PC-9 (cell line): ENCODE measurements at regions of chr14 and their contacts with region 1.

Region 1: DNA sequence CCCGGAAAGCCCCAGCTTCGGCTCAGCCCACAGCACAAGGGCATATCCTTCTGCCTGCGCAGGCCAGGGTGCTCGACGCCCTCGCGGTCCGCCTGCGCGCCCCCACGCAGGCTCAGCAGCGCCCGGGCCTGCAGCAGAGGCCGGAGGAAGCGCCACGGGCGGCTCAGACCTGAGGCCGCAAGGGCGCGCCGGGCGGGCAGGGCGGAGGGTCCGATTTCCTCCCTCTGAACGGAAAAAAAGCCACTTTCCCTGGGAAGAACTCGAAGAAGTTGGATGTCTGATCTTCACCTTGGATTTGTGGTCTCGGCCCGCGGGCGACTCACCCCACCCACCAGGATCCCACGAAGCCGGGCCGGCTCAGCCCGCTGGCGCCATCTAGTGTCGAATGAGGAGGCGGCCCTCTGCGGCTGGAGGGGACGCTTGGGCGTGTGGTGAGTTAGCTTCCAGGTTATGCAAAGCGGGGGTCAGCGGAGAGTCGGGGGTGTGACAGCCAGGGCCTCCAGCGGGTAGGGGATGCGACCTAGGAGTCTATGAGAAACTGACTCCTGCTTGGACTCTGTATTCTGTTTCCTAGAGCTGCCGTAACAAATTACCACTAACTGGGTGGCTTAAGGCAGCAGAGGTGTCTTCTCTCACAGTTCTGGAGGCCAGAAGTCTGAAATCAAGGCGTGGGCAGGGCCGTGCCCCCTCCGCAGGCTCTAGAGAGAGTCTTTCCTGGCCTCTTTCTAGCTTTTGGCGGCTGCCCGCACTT is 40.0 kb upstream of the SRSF5 start:
- DNase-seq: peak in 1 of 2 experiments; percentile 82
- H3K4me3 ChIP-seq: peak overlapping the region; percentile 52; the same call in 1 of the 2 replicates
- H3K27ac ChIP-seq: no peak overlapping the region
- H3K4me1 ChIP-seq: 0 out of 2 replicates have a peak, but pooled peaks cover 3% of the 10 kb centered on the region
- H3K27me3 ChIP-seq: no peaks in the 10 kb centered on the region
- CTCF ChIP-seq: peak; percentile 99

Region 2: DNA sequence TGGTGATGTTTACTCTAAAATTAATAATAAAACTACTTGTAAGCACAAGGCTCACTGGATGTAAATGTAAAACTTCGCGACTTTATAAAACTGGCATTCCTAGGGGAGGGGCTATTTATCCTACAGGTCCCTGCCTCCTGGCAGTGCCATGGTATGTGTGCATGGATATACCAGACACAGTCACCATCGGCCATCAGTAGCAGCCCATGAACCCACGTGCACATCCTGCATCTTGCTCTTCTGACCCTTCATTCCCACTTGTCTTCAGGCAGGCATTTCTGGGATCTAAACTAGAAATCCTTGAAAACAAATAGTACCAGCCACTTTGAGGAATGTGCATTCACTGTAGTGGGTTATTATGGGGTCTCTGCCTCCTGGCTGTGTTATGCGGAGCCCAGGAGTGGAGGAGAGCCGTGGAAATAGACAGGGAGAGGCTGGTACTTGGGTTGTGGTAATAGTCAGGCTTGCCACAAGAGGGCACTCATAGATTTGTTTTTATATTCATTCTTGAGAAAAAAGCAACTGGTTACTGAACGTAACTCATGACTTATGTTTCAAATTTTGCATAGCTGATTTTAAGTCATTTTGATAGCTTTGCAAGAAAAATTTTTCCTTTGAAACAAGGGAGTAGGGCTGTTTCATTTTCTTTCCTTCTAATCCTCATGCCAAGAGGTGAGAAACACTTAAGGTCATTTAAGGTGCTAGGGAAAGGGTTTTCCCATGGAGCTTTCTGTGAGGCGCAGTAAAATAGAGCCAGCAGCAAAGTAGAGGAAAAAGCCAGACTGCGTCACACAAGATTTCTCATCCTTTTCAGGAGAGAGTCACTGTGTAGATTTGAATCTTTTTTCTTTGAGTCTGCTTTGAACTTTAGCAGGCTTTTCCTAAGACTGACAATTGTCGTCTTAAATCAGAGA is 484.4 kb before region 1 on chr14:
- CTCF ChIA-PET with region 1: no interaction called
- POLR2A ChIA-PET with region 1: no interaction called
- intact Hi-C with region 1: loop called (anchors 5 kb)
- DNase-seq: peak in 1 of 2 experiments; percentile 47
- H3K4me3 ChIP-seq: no peak overlapping the region
- H3K27ac ChIP-seq: no peak overlapping the region
- H3K4me1 ChIP-seq: no peaks in the 10 kb centered on the region
- H3K27me3 ChIP-seq: no peaks in the 10 kb centered on the region
- CTCF ChIP-seq: peak; percentile 94

Region 3: GRCh38 chr14:69580009-69580577 is 146.8 kb before region 1 on chr14:
- CTCF ChIA-PET with region 1: interaction called, 17 read pairs
- POLR2A ChIA-PET with region 1: no interaction called
- intact Hi-C with region 1: loop called (anchors 1 kb)
- DNase-seq: peak; percentile 44 to 95
- H3K4me3 ChIP-seq: no peak overlapping the region
- H3K27ac ChIP-seq: no peak overlapping the region
- H3K4me1 ChIP-seq: peaks cover 21% of the 10 kb centered on the region
- H3K27me3 ChIP-seq: no peaks in the 10 kb centered on the region
- CTCF ChIP-seq: peak; percentile 64; the same call in 1 of the 2 replicates

Region 4: GRCh38 chr14:69685716-69686115 is 41.2 kb before region 1 on chr14:
- CTCF ChIA-PET with region 1: no interaction called
- POLR2A ChIA-PET with region 1: no interaction called
- intact Hi-C with region 1: no loop called
- DNase-seq: no peak
- H3K4me3 ChIP-seq: no peak overlapping the region
- H3K27ac ChIP-seq: no peak overlapping the region
- H3K4me1 ChIP-seq: no peaks in the 10 kb centered on the region
- H3K27me3 ChIP-seq: no peaks in the 10 kb centered on the region
- CTCF ChIP-seq: no peak

Region 5: DNA sequence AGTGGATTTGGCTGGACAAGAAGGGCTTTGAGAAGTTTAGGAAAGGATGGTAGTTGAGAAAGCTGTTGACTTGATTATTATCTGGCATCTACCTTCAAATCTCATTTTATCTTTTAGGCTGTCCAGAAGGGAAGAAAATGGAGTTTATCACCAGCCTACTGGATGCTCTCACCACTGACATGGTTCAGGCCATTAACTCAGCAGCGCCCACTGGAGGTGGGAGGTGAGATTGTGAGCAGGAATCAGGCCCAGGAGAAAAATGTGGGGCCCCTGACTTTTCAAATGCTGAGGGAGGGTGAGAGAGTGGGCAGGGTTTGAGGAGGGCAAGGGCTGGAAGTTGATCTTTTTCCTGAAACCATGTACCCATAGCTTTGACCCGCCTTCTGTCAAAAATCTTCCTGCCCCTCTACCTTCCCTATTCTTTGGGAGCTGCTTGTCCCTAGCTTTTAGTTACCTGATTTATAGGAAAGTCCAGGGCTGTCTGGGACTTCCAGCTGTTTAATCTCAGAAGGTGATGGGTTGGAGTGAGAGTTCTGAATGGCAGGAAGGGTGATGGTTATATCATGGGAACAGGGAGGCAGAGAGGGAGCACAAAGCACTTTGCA is 286.4 kb after region 1 on chr14:
- CTCF ChIA-PET with region 1: no interaction called
- POLR2A ChIA-PET with region 1: no interaction called
- intact Hi-C with region 1: loop called (anchors 5 kb)
- DNase-seq: peak in 1 of 2 experiments; percentile 15
- H3K4me3 ChIP-seq: no peak overlapping the region
- H3K27ac ChIP-seq: no peak overlapping the region
- H3K4me1 ChIP-seq: no peaks in the 10 kb centered on the region
- H3K27me3 ChIP-seq: peaks cover 7% of the 10 kb centered on the region; the same call in 1 of the 2 replicates
- CTCF ChIP-seq: peak; percentile 90

Region 6: DNA sequence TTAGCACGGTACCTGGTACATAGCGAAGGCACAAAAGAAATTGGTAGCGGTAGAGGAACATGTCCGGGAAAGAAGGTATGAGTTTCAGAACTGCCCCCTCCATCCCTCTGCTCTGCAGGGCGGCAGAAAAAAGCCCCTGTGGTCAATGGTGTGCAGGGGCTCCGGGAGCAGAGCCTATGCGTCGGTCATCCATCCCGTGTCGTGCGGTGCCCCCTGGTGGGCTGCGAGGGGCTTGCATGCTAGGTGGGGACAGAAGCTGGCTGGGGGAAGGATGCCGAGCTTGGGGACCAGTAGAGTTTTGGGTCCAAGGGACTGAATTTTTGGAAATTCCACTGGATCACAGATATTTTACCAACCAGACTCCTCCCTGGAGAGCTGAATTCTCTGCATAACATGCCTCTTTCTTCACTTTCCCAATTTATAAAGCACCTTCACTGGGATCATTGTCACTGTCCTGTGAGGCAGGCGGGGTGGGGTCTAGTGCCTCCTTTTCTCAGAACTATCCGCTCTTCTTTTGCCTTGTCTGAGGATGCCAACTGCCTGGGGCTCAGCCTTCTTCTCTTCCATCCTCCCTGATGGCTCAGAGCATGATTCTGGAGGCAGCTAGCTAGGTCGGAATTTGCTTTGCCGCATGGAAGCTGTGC is 301.0 kb after region 1 on chr14:
- CTCF ChIA-PET with region 1: interaction called, 12 read pairs
- POLR2A ChIA-PET with region 1: no interaction called
- intact Hi-C with region 1: no loop called
- DNase-seq: peak in 1 of 2 experiments; percentile 59
- H3K4me3 ChIP-seq: no peak overlapping the region
- H3K27ac ChIP-seq: no peak overlapping the region
- H3K4me1 ChIP-seq: no peaks in the 10 kb centered on the region
- H3K27me3 ChIP-seq: peaks cover 9% of the 10 kb centered on the region; the same call in 1 of the 2 replicates
- CTCF ChIP-seq: peak; percentile 96